ENCODE measurements at regions of chr11 and their contacts with region 1.

Region 1: GRCh38 chr11:12717851-12718291 is 43.6 kb downstream of the TEAD1 start:
- DNase-seq: peak; percentile 81
- H3K4me3 Mint-ChIP-seq: peak overlapping the region; percentile 9
- H3K27ac Mint-ChIP-seq: no peak overlapping the region
- H3K4me1 Mint-ChIP-seq: peaks cover 19% of the 10 kb centered on the region
- H3K27me3 Mint-ChIP-seq: peaks cover 65% of the 10 kb centered on the region

Region 2: DNA sequence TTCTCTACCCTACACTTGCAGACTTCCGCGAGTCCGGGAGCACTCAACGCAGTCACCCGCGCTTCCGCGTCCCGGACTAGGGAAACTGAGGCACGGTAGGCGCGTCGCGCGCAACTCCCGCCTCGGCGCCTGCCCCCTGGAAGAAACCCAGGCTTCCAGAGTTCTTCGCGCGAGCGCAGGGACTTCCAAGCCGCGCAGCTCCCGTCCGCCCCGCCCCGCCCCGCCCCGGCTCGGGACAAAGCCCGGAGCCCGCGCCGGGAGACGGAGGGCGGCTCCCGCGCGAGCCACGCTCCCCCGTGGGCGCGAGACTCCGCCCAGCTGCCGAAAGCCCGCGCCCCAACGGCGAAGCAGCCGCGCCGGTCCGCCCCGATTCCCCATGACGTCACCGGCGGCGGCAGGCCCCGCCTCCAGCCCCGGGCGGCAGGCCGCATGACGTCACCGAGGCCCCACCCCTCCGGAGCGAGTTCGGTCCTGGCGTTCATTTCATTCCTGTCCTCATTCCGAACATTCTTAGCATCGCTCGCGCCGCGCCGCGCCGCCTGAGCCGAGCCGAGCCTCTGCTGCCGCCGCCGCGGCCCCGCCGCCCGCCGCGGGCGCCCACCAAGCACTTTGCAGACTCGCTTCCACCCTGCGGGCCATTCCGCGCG is 43.8 kb before region 1 on chr11 and contains the start of gene TEAD1:
- CTCF ChIA-PET with region 1: no interaction called
- POLR2A ChIA-PET with region 1: no interaction called
- intact Hi-C with region 1: loop called (anchors 2 kb)
- DNase-seq: peak; percentile 91
- H3K4me3 Mint-ChIP-seq: peak within 1 kb of the TSS; percentile 76
- H3K27ac Mint-ChIP-seq: no peak within 1 kb of the TSS
- H3K4me1 Mint-ChIP-seq: peaks cover 8% of the 10 kb centered on the region
- H3K27me3 Mint-ChIP-seq: peaks cover 61% of the 10 kb centered on the region
- total RNA-seq, gene TEAD1: 1.0 to 1.5 TPM

Region 3: GRCh38 chr11:12693479-12694181 is 24.2 kb before region 1 on chr11:
- CTCF ChIA-PET with region 1: no interaction called
- POLR2A ChIA-PET with region 1: no interaction called
- intact Hi-C with region 1: loop called (anchors 2 kb)
- DNase-seq: peak; percentile 29
- H3K4me3 Mint-ChIP-seq: no peak overlapping the region
- H3K27ac Mint-ChIP-seq: no peak overlapping the region
- H3K4me1 Mint-ChIP-seq: peaks cover 12% of the 10 kb centered on the region
- H3K27me3 Mint-ChIP-seq: peaks cover 51% of the 10 kb centered on the region

Region 4: GRCh38 chr11:12769834-12770345 is 52.0 kb after region 1 on chr11:
- CTCF ChIA-PET with region 1: no interaction called
- POLR2A ChIA-PET with region 1: no interaction called
- intact Hi-C with region 1: loop called (anchors 2 kb)
- DNase-seq: no peak
- H3K4me3 Mint-ChIP-seq: no peak overlapping the region
- H3K27ac Mint-ChIP-seq: no peak overlapping the region
- H3K4me1 Mint-ChIP-seq: peaks cover 2% of the 10 kb centered on the region
- H3K27me3 Mint-ChIP-seq: peaks cover 13% of the 10 kb centered on the region